PC-3 (cell line): ENCODE measurements at regions of chr4 and their contacts with region 1.

Region 1: DNA sequence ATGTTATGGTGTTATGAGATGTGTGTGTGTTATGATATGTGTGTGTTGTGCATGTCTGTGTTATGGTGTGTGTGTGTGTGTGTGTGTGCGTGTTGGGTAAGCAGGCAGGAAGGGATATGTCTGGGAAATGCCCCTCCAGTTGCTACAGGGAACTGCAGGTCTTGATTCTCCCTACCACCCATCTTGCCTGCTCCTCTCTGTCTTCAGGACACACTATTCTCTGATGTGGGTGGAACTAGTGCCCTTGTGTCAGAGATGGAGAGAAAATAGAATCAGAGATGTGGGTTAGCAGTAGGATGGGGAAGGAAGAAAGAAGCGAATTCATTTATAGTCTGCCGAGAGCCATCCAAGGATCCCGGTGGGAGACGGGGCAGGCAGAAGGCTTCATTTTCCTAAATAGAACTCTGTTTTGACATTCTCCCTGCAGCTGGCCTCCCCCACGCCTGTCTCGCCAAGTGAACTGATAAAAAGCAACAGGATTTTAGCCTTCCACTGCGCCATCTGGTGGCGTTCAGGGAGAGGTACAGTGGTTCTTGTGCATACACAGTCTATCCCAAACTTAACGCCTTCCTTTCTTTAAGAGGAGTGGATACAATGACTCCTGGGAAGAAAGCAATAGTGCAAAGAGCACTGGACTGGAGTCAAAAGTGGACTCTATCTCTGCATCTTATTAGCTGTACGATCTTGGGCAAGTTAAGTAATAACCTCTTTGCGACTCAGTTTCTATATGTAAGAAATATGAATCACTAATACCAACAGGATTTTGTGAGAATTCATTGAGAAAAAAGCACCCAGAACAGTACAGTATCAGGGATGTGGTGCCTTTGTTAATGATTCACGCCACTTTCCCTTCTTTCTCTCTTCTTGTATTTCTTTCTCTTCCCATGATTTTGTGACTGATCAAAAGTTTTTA is 14.1 kb upstream of the MGST2 start:
- DNase-seq: peak; percentile 68
- ATAC-seq: peak; percentile 37
- H3K4me3 ChIP-seq: no peak overlapping the region
- H3K27ac ChIP-seq: no peak overlapping the region
- H3K4me1 ChIP-seq: peaks cover 20% of the 10 kb centered on the region
- H3K27me3 ChIP-seq: no peaks in the 10 kb centered on the region
- CTCF ChIP-seq: peak; percentile 85

Region 2: DNA sequence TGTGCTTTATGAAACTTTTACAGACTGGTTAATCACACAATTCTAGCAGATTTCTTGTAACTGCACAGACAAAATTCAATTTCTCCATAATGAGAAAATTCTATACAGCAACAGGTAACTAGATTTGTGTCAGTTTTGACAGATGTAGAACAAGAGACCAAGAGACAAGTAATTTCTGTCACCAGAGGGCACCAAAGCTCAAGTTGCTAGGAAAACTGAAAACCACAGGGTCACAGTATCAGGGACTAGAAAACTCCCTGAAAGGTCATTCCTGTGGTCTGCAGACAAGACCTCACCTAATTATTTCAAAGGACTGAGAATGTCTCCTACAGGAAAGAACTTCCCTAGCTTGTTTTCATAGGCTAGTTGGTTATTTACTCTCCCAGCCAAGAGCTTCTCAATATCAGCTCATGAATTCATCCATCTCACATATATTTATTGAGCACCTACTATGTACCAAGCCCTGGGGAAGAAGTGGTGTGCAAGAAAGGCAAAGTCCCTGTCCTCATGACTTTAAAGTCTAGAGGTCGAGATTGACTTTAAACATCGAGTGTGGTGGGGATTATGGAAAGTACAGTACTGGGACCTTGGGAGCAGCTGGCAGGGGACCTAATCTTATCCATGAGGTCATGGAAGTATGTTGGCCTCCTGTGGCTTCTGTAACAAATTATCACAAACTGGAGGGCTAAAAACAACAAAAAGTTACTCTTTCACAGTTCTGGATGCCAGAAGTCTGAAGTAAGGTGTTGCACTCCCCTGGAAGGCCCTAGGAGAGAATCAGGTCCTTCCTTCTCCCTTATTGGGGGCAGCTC is 47.8 kb before region 1 on chr4:
- CTCF ChIA-PET with region 1: interaction called, 10 read pairs
- POLR2A ChIA-PET with region 1: interaction called, 3 read pairs
- intact Hi-C with region 1: loop called (anchors 1 kb)
- DNase-seq: peak; percentile 73
- ATAC-seq: peak; percentile 20; the same call in 1 of the 2 replicates
- H3K4me3 ChIP-seq: no peak overlapping the region
- H3K27ac ChIP-seq: no peak overlapping the region
- H3K4me1 ChIP-seq: peaks cover 30% of the 10 kb centered on the region
- H3K27me3 ChIP-seq: no peaks in the 10 kb centered on the region
- CTCF ChIP-seq: peak; percentile 75

Region 3: GRCh38 chr4:139619644-139620043 is 31.9 kb before region 1 on chr4:
- CTCF ChIA-PET with region 1: interaction called, 4 read pairs
- POLR2A ChIA-PET with region 1: interaction called, 3 read pairs
- intact Hi-C with region 1: loop called (anchors 1 kb)
- DNase-seq: peak; percentile 64
- ATAC-seq: peak; percentile 81
- H3K4me3 ChIP-seq: no peak overlapping the region
- H3K27ac ChIP-seq: no peak overlapping the region
- H3K4me1 ChIP-seq: no peaks in the 10 kb centered on the region
- H3K27me3 ChIP-seq: no peaks in the 10 kb centered on the region
- CTCF ChIP-seq: peak; percentile 64

Region 4: DNA sequence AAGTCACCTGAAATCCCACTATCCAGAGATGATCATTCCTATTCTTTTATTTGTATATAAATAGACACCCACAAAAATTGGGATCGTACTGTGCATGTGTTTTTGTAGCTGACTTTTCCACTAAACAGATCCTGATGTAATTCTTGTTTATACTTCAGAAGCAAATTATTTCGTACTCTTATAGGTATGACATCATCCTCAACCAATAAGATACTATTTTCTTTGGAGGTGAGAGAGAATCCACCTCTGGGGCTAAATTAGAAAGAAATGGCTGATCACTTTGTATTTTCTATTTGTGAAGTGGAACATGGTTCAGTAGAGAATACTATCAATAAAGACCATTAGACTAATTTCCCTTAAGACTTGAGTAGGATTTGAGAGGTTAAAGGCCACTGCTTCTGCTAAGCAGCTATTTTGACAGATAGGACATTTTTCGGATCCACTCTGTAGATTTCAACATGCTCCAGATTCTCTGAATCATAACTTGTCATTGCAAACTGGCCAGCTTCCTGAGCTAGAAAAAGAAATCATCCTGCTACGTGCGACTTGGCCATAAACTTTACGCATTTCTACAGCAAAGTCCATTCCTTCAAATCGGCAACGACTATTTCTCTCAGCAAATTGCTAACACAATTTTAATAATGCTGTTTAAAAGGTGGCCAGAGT is 69.1 kb after region 1 on chr4:
- CTCF ChIA-PET with region 1: no interaction called
- POLR2A ChIA-PET with region 1: no interaction called
- intact Hi-C with region 1: no loop called
- DNase-seq: no peak
- ATAC-seq: no peak
- H3K4me3 ChIP-seq: no peak overlapping the region
- H3K27ac ChIP-seq: no peak overlapping the region
- H3K4me1 ChIP-seq: no peaks in the 10 kb centered on the region
- H3K27me3 ChIP-seq: no peaks in the 10 kb centered on the region
- CTCF ChIP-seq: no peak